ENCODE measurements at regions of chr17 and their contacts with region 1.

Region 1: DNA sequence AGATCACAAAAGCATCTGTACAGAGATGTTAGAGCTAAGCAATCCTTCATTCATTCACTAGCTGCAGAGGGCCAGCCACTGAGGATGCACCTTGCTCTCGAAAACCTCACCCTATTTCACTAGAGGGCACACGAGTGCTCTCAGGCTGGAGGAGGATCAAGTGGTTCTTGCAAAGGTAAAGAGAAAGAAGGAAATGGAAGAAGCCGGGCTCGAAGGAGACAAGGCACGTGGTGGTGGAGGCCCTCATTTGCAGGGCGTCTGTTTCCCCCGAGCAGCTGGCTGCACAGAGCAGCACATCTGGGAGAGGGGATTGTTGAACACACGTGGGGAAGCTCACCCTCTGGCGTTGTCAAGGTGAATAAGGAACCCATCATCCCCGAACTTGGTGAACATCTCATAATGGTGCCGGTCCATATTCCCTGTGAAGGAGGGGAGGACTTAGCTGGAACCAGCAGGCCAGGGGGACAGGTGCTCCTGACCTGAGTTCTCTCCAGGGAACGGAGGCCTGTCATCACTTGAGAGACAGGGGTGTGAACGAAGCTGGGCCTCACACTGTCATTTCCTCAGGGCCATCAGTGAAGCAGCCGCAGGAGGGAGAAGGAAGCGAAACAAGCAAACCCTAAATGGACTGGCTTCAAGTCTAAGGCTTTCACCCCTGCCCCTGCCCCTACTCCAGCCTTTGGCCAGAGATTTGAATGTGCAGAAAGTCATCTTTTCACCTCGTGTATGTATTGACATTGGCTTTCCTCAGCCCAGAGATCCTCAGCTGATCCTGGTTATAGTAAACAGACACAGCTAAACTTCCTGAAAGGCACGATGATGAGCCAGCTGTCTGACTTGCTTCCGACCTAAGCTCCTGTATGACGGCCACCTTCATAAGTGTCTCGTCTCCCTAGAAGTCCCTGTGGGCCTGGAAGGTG is 27.6 kb downstream of the PRKAR1A start:
- DNase-seq: peak; percentile 49 to 51
- H3K4me3 ChIP-seq: no peak overlapping the region
- H3K27ac ChIP-seq: peak overlapping the region; percentile 35 to 50
- H3K4me1 ChIP-seq: no peaks in the 10 kb centered on the region
- H3K27me3 ChIP-seq: no peaks in the 10 kb centered on the region
- CTCF ChIP-seq: peak; percentile 38 to 58 (median 46)
- POLR2A ChIP-seq: no peak

Region 2: DNA sequence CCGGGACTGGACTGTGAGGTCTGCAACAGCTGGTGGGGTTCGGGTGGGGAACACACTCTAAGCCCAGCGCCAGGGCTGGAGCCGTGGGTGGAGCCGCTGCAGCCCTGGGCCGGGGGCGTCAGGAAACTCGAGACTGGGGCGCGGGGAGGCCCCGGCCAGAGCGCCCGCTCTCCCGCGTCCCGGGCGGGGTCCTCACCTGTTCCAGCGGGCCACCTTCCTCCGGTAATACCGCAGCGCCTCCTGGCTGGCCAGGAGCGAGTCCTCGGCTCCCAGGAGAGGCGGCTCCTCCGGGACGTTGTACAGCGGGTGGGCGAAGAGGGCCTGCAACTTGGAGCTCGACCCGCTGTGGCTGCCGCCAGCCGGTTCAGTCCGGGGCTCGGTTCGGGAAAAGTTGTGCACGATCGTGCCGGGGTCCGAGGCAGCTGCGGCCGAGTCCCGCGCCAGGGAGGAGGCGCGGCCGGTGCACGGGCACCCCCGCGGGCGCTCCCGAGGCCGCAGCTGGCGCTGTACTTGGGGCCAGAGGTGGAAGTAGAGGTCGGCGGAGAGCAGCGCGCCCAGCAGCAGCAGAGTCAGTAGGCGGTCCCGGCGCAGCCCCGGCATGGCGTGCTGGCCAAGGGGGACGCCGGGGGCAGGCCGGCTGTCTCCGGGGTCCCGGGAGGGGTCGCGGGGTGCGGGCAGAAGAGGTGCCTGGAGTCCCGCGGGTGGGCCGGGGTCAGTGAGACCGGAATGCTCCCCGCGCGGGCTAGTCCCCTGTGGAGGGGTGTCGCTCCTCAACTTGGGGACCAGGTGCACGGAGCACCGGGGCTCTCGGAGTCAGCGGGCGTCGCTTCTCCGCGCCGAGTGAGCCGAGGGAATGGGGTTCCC is 60.5 kb after region 1 on chr17:
- intact Hi-C with region 1: loop called (anchors 10 kb)
- DNase-seq: peak; percentile 68
- H3K4me3 ChIP-seq: peak overlapping the region; percentile 68 to 75
- H3K27ac ChIP-seq: peak overlapping the region; percentile 80 to 91
- H3K4me1 ChIP-seq: peaks cover 2 to 5% of the 10 kb centered on the region in 2 donors
- H3K27me3 ChIP-seq: no peaks in the 10 kb centered on the region
- CTCF ChIP-seq: peak; percentile 48 to 68 (median 65)
- POLR2A ChIP-seq: no peak

Region 3: DNA sequence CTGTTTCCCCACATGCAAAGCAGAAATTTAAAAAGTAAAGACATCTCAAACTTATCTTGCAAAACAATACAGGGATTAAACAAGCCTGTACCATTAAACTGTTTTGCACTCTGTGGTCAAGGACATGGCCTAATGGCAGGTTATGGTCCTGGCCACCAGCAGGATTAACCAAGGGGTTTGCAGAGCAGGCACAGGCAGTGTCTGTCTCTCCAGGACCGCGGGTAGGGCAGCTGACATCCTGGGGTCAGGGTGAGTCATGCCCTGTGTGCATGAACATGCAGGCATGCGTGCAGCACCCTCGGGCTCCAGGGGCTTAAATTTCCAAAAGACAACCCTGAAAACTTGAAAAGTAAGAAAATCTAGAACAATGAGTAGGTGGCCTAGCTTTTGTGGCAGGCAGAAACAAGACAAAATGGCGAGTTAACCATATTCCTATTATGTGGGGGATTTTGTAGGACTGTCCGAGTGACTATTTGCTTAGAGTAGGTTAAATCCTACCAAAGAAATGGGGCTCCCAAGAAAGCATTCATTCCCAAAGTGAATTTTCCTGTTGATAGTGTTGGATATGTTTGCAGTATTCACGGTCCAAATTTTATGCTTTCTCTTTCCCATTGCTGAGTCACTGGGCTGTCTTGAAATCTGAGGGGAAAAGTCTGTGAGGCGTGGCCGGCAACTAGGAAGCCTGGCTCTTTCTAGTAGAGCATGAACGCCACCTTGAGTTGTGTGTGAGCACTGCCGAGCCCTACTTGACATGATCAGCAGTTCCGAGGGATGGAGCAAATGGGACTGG is 219.7 kb after region 1 on chr17:
- intact Hi-C with region 1: loop called (anchors 10 kb)
- DNase-seq: peak; percentile 92 to 94
- H3K4me3 ChIP-seq: peak overlapping the region in 1 of 2 donors; percentile 23
- H3K27ac ChIP-seq: peak overlapping the region; percentile 75 to 80
- H3K4me1 ChIP-seq: peaks cover 0 to 5% of the 10 kb centered on the region in 2 donors
- H3K27me3 ChIP-seq: no peaks in the 10 kb centered on the region
- CTCF ChIP-seq: peak; percentile 92 to 97 (median 92)
- POLR2A ChIP-seq: no peak